Activated T-helper 1 cell treated with anti-CD3 and anti-CD28 coated beads, Interleukin-12 subunit alpha, Interleukin-12 subunit beta, Interleukin-2, Interleukin-4 antibody, amounts not matched to agents 30 ng/mL and 10 ng/mL and 1 ng/mL, durations not matched to agents 14 hours and 24 hours and 36 hours (primary cell): ENCODE measurements at regions of chr6 and their contacts with region 1.

Region 1: GRCh38 chr6:41002216-41002615 is 36.8 kb downstream of the UNC5CL start:
- DNase-seq: no peak
- H3K4me3 Mint-ChIP-seq: no peak overlapping the region
- H3K27ac Mint-ChIP-seq: no peak overlapping the region
- H3K4me1 Mint-ChIP-seq: no peaks in the 10 kb centered on the region
- H3K27me3 Mint-ChIP-seq: peaks cover 39% of the 10 kb centered on the region

Region 2: GRCh38 chr6:41013466-41014153 is 11.4 kb after region 1 on chr6:
- intact Hi-C with region 1: no loop called
- DNase-seq: no peak
- H3K4me3 Mint-ChIP-seq: no peak overlapping the region
- H3K27ac Mint-ChIP-seq: no peak overlapping the region
- H3K4me1 Mint-ChIP-seq: no peaks in the 10 kb centered on the region
- H3K27me3 Mint-ChIP-seq: peaks cover 18% of the 10 kb centered on the region

Region 3: GRCh38 chr6:41039060-41039998 is 37.1 kb after region 1 on chr6 and contains the start of gene UNC5CL:
- intact Hi-C with region 1: loop called (anchors 1 kb)
- DNase-seq: peak; percentile 45
- H3K4me3 Mint-ChIP-seq: no peak within 1 kb of the TSS
- H3K27ac Mint-ChIP-seq: peak within 1 kb of the TSS; percentile 3
- H3K4me1 Mint-ChIP-seq: peaks cover 19% of the 10 kb centered on the region
- H3K27me3 Mint-ChIP-seq: peaks cover 7% of the 10 kb centered on the region
- total RNA-seq, gene UNC5CL: 0.93 and 0.99 TPM in 2 replicates

Region 4: DNA sequence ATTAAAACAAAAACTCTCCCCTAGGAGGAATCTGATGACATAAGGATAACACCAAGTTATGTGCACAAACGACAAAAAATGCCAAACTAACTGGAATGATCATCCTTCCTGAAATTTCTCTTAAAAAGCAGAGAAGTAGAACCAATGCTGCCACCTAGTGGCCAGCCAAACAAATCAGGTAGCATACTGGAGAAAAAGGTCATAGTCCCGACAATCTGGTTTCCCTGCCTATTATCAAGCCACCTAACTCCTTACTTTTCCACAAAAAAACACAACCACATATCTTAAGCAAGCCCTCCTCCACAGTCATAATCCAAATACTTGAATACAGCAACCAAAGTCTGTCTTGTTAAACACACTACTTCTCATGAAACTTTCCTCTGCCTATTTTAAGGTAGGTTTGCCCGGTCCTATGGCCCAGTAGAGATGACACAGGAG is 64.7 kb after region 1 on chr6:
- intact Hi-C with region 1: loop called (anchors 1 kb)
- DNase-seq: peak; percentile 31
- H3K4me3 Mint-ChIP-seq: no peak overlapping the region
- H3K27ac Mint-ChIP-seq: no peak overlapping the region
- H3K4me1 Mint-ChIP-seq: peaks cover 43% of the 10 kb centered on the region
- H3K27me3 Mint-ChIP-seq: no peaks in the 10 kb centered on the region